ENCODE measurements at regions of chr20 and their contacts with region 1.

Region 1: DNA sequence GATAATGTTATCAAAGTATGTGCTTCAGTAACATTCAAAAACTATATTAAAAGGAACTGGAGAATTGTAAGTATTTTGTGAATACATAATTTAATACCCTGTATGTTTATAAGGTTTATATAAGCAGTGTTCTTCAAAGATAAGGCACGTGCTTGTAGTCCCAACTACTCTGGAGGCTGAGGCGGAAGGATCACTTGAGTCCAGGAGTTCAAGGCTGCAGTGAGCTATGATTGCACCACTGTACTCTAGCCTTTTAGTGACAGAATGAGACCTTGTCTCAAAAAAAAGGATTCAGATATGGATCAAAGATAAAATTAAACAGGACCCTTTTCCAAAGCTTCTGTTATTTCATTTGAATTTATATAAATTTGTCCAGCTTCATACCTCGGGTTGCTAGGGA is 17.2 kb downstream of the CSE1L start:
- DNase-seq: no peak
- H3K4me3 ChIP-seq: no peak overlapping the region
- H3K27ac ChIP-seq: no peak overlapping the region
- H3K4me1 ChIP-seq: no peaks in the 10 kb centered on the region
- H3K27me3 ChIP-seq: no peaks in the 10 kb centered on the region
- CTCF ChIP-seq: no peak

Region 2: DNA sequence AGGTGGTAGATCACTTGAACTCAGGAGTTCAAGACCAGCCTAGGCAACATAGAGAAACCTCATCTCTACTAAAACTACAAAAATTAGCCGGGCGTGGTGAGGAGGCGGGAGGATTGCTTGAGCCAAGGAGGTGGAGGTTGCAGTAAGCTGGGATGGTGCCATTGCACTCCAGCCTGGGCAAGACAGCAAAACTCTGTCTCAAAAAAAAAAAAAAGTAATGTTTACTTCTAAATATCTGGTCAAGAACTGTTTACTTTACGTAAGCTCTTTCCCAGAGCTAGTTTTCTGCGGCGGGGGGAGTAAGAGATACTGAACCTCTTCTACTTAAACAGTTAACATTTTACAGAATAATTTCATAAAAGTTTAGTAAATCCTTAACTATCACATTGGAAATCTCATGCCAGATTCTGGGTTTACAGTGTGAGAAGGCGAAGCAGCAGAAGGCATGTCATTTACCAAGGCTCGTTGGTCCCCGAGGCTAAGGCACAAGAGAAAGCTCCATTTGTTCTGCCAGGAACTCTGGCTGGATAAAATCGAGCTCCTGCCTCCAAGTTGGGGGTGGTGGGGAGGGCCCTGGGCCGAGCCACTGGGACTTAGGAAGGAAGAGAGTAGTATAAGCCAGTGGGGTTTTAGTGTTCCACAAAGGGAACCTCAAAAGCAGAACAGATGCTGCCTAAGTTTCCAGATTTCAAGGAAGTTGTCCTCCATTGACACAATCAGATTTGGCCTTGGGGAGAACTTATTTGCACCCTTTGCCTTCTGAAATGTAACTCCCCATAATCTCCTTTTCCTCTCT is 100.1 kb before region 1 on chr20:
- CTCF ChIA-PET with region 1: no interaction called
- dilution Hi-C with region 1: loop called (anchors 5 kb)
- in situ Hi-C with region 1: no loop called
- intact Hi-C with region 1: no loop called
- DNase-seq: no peak
- H3K4me3 ChIP-seq: no peak overlapping the region
- H3K27ac ChIP-seq: no peak overlapping the region
- H3K4me1 ChIP-seq: no peaks in the 10 kb centered on the region
- H3K27me3 ChIP-seq: no peaks in the 10 kb centered on the region
- CTCF ChIP-seq: no peak

Measured in mammary epithelial cell (primary cell).